ENCODE measurements at regions of chr16 and their contacts with region 1.

Region 1: DNA sequence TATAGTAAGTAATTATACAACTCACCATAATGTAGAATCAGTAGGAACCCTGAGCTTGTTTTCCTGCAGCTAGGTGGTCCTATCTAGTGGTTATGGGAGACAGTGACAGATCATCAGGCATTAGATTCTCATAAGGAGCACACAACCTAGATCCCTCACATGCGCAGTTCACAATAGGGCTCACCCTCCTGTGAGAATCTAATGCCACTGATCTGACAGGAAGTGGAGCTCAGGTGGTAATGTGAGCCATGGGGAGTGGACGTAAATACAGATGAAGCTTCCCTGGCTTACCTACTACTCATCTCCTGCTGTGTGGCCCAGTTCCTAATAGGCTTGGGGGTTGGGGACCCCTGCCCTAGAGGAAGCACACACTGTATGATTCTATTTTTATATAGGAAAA is 21.8 kb upstream of the ZNF469 start:
- DNase-seq: no peak

Region 2: DNA sequence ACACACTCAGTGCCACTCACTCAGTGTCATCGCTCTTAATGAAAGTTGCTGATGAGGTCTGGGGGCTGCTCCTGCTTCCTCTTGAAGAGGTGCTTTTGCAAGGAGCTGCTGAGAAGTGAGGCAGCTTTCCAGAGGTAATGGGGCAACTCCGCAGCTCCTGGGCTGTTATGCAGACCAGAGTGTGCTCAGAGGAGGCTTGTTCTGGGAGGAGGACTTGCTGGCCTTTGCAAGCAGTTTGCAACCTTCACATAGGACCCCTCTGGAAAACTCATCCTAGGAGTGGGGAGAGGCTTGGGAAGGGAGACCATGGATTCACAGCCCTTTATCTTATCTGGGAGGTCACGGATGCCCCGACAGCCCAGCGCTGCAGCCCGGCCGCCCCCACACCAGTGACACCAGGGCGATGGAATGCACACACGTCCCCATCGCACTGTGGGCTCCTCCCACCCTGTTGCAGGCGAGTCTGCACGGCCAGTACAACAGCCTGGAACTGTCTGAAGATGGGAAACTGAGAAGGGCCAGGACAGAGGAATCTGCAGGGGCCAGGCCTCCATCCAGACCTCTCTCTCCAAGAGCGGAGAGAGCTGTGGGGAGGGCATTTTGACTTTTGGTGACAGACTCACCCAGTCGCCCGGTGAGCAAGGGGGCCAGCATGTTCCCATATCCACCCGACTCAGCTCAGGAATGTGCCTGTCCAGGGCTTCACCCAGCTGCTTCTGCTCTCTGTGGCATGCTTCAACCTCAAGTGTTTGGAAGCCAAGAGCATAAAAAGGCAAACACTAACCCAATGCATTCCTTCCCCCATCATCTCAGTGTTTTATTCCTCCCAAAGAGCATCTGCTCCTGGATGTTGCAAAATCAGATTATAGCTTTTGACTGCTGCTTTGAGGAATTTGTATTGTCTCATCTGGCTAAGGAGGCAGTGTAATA is 56.8 kb before region 1 on chr16:
- intact Hi-C with region 1: no loop called
- DNase-seq: peak; percentile 91

Region 3: DNA sequence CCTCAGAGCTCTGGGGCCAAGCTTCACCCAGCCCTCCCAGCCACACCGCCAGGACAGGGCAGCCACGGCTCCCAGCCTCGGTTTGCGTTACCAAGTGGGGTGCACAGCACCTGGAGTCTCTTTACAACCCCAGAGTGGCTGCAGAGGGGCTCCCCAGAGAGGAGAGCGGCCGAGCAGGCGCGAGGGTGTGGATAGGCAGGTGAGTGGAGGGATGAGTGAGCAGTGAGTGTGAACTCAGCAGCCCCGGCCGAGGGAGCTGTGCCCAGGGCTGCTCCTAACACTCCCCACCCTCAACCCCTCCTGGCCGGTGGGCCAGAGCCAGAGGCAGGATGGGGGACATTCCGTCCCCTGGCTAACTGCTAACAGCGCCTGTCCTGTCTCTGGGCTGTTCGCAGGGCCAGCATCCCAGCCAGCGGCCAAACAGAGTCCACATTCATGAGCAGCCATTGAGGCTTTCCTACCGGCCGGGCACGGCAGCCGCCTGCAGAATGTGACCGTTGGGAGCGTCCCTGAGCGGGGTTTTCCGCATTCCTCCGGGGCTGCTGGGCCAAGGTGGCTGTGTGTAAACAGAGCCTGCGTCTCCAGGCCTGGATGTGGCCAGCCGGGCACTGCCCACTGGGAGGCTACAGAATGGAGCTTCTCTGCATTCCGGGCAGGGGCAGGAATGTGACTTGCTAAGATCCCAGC is 27.1 kb after region 1 on chr16:
- intact Hi-C with region 1: loop called in 1 of 2 experiments (anchors 1 kb)
- DNase-seq: no peak

Region 4: GRCh38 chr16:88452482-88453216 is 91.7 kb after region 1 on chr16:
- intact Hi-C with region 1: no loop called
- DNase-seq: peak; percentile 99

Measured in posterior vena cava (tissue), 2 donors.